ENCODE measurements at regions of chr4 and their contacts with region 1.

Region 1: DNA sequence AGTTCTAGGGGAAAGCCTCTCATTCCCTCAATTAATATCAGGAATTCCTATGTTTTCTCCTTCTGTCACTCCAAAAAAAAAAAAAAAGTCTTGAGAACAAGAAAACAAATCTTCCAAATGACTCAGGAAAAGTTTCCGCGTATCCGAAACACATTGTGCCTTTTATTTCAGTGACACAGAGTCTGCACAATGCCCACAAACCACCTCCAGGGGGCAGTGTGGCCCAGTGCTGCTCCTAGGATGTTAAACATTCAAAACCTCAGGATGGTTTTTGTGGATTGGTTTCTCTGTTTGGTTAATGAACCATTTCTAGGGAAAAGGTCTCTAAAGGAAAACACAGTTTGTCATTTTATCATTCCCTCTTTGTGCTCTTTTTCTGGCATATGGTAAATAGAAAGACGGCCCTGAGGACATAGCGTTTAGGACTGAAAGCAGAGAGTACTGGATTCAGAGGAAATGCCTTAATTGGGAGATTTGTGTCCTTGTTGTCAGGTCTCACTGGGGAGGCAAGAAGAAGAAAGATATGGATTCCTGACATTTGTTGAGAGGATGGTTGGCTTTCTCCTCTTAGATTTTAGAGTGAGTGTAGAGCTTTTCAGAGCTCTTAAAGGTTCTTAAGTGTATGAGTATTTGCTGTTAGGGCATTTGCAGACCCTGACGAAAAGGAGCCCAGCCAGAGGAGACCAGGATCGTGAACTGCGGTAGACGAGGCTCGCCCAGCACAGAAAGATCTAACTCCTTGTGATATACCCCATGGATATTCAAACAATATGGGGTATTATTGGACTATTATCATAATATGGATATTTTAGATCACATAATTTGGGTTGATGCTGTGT is 65.7 kb upstream of the MAP9 start:
- DNase-seq: peak; percentile 93
- H3K4me3 ChIP-seq: peak overlapping the region in 1 of 3 experiments; percentile 53
- H3K27ac ChIP-seq: no peak overlapping the region
- H3K4me1 ChIP-seq: peaks cover 3% of the 10 kb centered on the region
- H3K27me3 ChIP-seq: peaks cover 0 to 3% of the 10 kb centered on the region in 2 experiments
- CTCF ChIP-seq: peak; percentile 88 to 94
- POLR2A ChIP-seq: no peak

Region 2: DNA sequence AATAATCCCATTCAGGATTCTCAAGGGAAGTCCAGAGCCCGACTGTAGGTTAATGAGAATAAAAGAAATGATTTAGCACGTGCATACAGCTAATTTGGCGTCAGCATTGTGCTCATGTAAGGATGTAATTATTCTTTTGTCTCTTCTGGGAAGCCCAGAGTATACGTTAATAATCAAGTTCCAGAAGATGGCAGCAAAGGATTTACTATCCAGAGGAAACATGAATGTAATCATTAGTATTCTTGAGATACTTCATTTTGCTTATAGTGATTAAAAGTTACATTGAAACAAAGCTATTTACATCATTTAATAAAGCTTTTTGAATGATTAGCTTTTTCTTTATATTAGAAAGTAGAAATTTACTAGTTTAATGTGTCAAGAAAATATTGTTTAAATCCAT is 38.6 kb before region 1 on chr4:
- CTCF ChIA-PET with region 1: interaction called, 6 read pairs
- POLR2A ChIA-PET with region 1: no interaction called
- dilution Hi-C with region 1: no loop called
- intact Hi-C with region 1: loop called (anchors 1 kb)
- DNase-seq: peak; percentile 67
- H3K4me3 ChIP-seq: no peak overlapping the region
- H3K27ac ChIP-seq: no peak overlapping the region
- H3K4me1 ChIP-seq: no peaks in the 10 kb centered on the region
- H3K27me3 ChIP-seq: peaks cover 2 to 4% of the 10 kb centered on the region in 2 experiments
- CTCF ChIP-seq: peak; percentile 6 to 22
- POLR2A ChIP-seq: no peak

Region 3: GRCh38 chr4:155512817-155513216 is 70.3 kb after region 1 on chr4:
- CTCF ChIA-PET with region 1: no interaction called
- POLR2A ChIA-PET with region 1: no interaction called
- dilution Hi-C with region 1: no loop called
- intact Hi-C with region 1: loop called (anchors 5 kb)
- DNase-seq: peak; percentile 98
- H3K4me3 ChIP-seq: no peak overlapping the region
- H3K27ac ChIP-seq: no peak overlapping the region
- H3K4me1 ChIP-seq: peaks cover 5% of the 10 kb centered on the region
- H3K27me3 ChIP-seq: no peaks in the 10 kb centered on the region
- CTCF ChIP-seq: no peak
- POLR2A ChIP-seq: no peak

Region 4: GRCh38 chr4:155582971-155583437 is 140.5 kb after region 1 on chr4:
- CTCF ChIA-PET with region 1: no interaction called
- POLR2A ChIA-PET with region 1: no interaction called
- dilution Hi-C with region 1: no loop called
- intact Hi-C with region 1: no loop called
- DNase-seq: peak; percentile 91
- H3K4me3 ChIP-seq: peak overlapping the region in 1 of 3 experiments; percentile 22
- H3K27ac ChIP-seq: peak overlapping the region; percentile 60
- H3K4me1 ChIP-seq: peaks cover 20% of the 10 kb centered on the region
- H3K27me3 ChIP-seq: no peaks in the 10 kb centered on the region
- CTCF ChIP-seq: no peak
- POLR2A ChIP-seq: no peak

Region 5: GRCh38 chr4:155604718-155605626 is 162.5 kb after region 1 on chr4:
- CTCF ChIA-PET with region 1: no interaction called
- POLR2A ChIA-PET with region 1: no interaction called
- dilution Hi-C with region 1: no loop called
- intact Hi-C with region 1: loop called (anchors 5 kb)
- DNase-seq: no peak
- H3K4me3 ChIP-seq: no peak overlapping the region
- H3K27ac ChIP-seq: no peak overlapping the region
- H3K4me1 ChIP-seq: peaks cover 4% of the 10 kb centered on the region
- H3K27me3 ChIP-seq: no peaks in the 10 kb centered on the region
- CTCF ChIP-seq: no peak
- POLR2A ChIP-seq: no peak

Region 6: GRCh38 chr4:155667568-155668511 is 225.4 kb after region 1 on chr4:
- CTCF ChIA-PET with region 1: interaction called, 3 read pairs
- POLR2A ChIA-PET with region 1: no interaction called
- dilution Hi-C with region 1: no loop called
- intact Hi-C with region 1: loop called (anchors 2 kb)
- DNase-seq: peak; percentile 66
- H3K4me3 ChIP-seq: peak overlapping the region; percentile 39 to 83 (median 46)
- H3K27ac ChIP-seq: no peak overlapping the region
- H3K4me1 ChIP-seq: peaks cover 19% of the 10 kb centered on the region
- H3K27me3 ChIP-seq: peaks cover 12 to 16% of the 10 kb centered on the region in 2 experiments
- CTCF ChIP-seq: no peak
- POLR2A ChIP-seq: no peak

Region 7: GRCh38 chr4:155787113-155787710 is 344.7 kb after region 1 on chr4:
- CTCF ChIA-PET with region 1: interaction called, 76 read pairs
- POLR2A ChIA-PET with region 1: no interaction called
- dilution Hi-C with region 1: no loop called
- intact Hi-C with region 1: loop called (anchors 1 kb)
- DNase-seq: peak; percentile 75
- H3K4me3 ChIP-seq: no peak overlapping the region
- H3K27ac ChIP-seq: no peak overlapping the region
- H3K4me1 ChIP-seq: no peaks in the 10 kb centered on the region
- H3K27me3 ChIP-seq: no peaks in the 10 kb centered on the region
- CTCF ChIP-seq: peak; percentile 64 to 67
- POLR2A ChIP-seq: no peak

Measured in endothelial cell of umbilical vein (primary cell).